ENCODE measurements at regions of chr9 and their contacts with region 1.

Region 1: GRCh38 chr9:97710356-97711222 is 13.4 kb upstream of the XPA start:
- DNase-seq: peak in 8 of 9 experiments; percentile 20 to 79 (median 50)
- ATAC-seq: peak; percentile 74
- H3K4me3 ChIP-seq: no peak overlapping the region
- H3K4me3 Mint-ChIP-seq: peak overlapping the region; percentile 35
- H3K27ac ChIP-seq: no peak overlapping the region
- H3K27ac Mint-ChIP-seq: peak overlapping the region; percentile 45
- H3K4me1 ChIP-seq: peaks cover 24% of the 10 kb centered on the region
- H3K4me1 Mint-ChIP-seq: peaks cover 32% of the 10 kb centered on the region
- H3K27me3 ChIP-seq: no peaks in the 10 kb centered on the region
- H3K27me3 Mint-ChIP-seq: peaks cover 8% of the 10 kb centered on the region
- CTCF ChIP-seq: peak; percentile 96

Region 2: GRCh38 chr9:97660340-97660739 is 50.2 kb before region 1 on chr9:
- CTCF ChIA-PET with region 1: no interaction called
- POLR2A ChIA-PET with region 1: no interaction called
- intact Hi-C with region 1: no loop called
- DNase-seq: no peak
- ATAC-seq: no peak
- H3K4me3 ChIP-seq: no peak overlapping the region
- H3K4me3 Mint-ChIP-seq: no peak overlapping the region
- H3K27ac ChIP-seq: no peak overlapping the region
- H3K27ac Mint-ChIP-seq: no peak overlapping the region
- H3K4me1 ChIP-seq: no peaks in the 10 kb centered on the region
- H3K4me1 Mint-ChIP-seq: no peaks in the 10 kb centered on the region
- H3K27me3 ChIP-seq: no peaks in the 10 kb centered on the region
- H3K27me3 Mint-ChIP-seq: no peaks in the 10 kb centered on the region
- CTCF ChIP-seq: no peak

Region 3: DNA sequence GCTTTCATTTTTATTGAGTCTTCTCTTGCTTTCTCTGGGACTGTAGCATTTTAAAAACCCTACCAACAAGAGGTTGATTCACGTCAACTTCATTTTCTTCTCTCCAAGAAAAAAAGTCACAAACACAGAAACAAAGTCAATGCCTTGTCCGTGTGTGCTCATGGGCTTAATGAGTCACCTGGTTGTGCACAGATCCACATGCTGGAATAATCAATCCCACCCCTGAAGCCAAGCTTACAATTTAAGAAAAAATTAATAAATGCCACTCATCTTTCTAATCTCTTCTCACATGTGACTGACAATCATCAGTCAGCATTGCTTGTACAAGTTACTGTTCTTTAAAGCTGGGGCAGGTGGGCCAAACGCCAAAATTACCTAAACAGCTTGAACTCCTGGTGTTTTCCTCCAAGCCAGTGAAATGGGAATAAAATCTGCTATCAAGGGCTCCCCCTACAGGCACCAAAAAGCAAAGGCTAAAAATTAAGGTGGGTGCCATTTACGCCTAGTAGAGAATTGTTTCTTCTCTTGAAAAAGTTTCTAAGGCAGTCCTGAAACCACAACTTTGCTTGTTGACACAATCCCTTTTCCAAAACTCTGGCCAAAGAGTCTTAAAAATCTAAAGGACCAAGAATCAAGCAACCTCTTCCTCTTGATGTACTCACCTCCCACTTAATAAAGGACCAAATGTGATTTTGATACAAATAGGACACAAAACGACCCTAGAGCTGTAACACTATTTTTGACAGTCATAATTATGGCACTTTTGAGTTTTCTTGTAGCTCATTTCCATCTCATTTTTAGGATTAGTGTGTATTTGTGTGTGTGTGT is 190.4 kb after region 1 on chr9:
- CTCF ChIA-PET with region 1: interaction called, 9 read pairs
- POLR2A ChIA-PET with region 1: interaction called, 3 read pairs
- intact Hi-C with region 1: loop called (anchors 1 to 2 kb)
- DNase-seq: peak in 3 of 9 experiments; percentile 28 to 79 (median 67)
- ATAC-seq: no peak
- H3K4me3 ChIP-seq: no peak overlapping the region
- H3K4me3 Mint-ChIP-seq: no peak overlapping the region
- H3K27ac ChIP-seq: peak overlapping the region in 1 of 2 experiments; percentile 17
- H3K27ac Mint-ChIP-seq: peak overlapping the region; percentile 82
- H3K4me1 ChIP-seq: peaks cover 53% of the 10 kb centered on the region
- H3K4me1 Mint-ChIP-seq: peaks cover 53% of the 10 kb centered on the region
- H3K27me3 ChIP-seq: no peaks in the 10 kb centered on the region
- H3K27me3 Mint-ChIP-seq: no peaks in the 10 kb centered on the region
- CTCF ChIP-seq: peak; percentile 75

Region 4: GRCh38 chr9:97954550-97954989 is 244.0 kb after region 1 on chr9:
- CTCF ChIA-PET with region 1: interaction called, 4 read pairs
- POLR2A ChIA-PET with region 1: no interaction called
- intact Hi-C with region 1: loop called (anchors 1 to 2 kb)
- DNase-seq: peak; percentile 14 to 82 (median 59)
- ATAC-seq: peak; percentile 96
- H3K4me3 ChIP-seq: no peak overlapping the region
- H3K4me3 Mint-ChIP-seq: no peak overlapping the region
- H3K27ac ChIP-seq: no peak overlapping the region
- H3K27ac Mint-ChIP-seq: no peak overlapping the region
- H3K4me1 ChIP-seq: no peaks in the 10 kb centered on the region
- H3K4me1 Mint-ChIP-seq: peaks cover 6% of the 10 kb centered on the region
- H3K27me3 ChIP-seq: no peaks in the 10 kb centered on the region
- H3K27me3 Mint-ChIP-seq: no peaks in the 10 kb centered on the region
- CTCF ChIP-seq: peak; percentile 73

Region 5: GRCh38 chr9:98263482-98264357 is 553.1 kb after region 1 on chr9:
- CTCF ChIA-PET with region 1: no interaction called
- POLR2A ChIA-PET with region 1: no interaction called
- intact Hi-C with region 1: loop called (anchors 2 to 5 kb)
- DNase-seq: peak; percentile 70 to 87 (median 84)
- ATAC-seq: peak; percentile 100
- H3K4me3 ChIP-seq: no peak overlapping the region
- H3K4me3 Mint-ChIP-seq: no peak overlapping the region
- H3K27ac ChIP-seq: no peak overlapping the region
- H3K27ac Mint-ChIP-seq: no peak overlapping the region
- H3K4me1 ChIP-seq: no peaks in the 10 kb centered on the region
- H3K4me1 Mint-ChIP-seq: peaks cover 2% of the 10 kb centered on the region
- H3K27me3 ChIP-seq: no peaks in the 10 kb centered on the region
- H3K27me3 Mint-ChIP-seq: no peaks in the 10 kb centered on the region
- CTCF ChIP-seq: peak; percentile 92

Region 6: DNA sequence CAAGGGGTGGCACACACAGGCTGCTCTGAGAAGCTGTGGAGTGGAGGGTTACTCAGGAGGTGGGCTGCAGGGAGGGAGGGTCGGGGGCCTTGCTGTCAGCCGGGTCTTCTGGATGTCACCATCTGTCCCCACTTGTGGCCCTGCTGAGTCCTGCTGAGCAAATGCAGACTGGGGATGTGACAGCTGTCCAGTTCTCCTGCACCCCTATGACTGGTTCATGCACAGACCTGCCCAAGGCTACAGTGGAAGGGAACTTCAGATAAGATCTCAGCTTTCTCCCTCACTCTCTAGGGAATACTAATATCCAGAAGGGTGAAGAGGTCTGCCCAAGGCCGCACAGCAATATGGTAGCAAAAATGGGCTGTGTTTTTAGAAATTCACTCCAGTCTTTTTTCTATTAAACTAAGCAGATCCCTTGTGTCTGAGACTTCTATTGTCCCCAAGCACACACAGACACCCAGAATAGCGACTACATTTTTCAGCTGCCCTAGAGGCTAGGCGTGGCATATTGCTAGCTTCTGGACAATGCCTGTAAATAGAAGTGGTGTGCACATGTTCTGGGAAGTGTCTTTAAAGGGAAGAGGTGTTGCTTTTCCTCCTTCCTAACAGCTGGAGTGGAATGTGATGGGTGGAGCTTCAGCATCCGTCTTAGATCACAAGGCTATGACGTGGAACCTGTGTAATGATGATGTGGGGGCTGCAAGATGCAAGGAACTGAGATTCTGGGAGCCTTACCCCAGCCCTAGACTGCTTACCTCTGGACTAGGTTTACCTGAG is 596.0 kb after region 1 on chr9:
- CTCF ChIA-PET with region 1: no interaction called
- POLR2A ChIA-PET with region 1: no interaction called
- intact Hi-C with region 1: no loop called
- DNase-seq: no peak
- ATAC-seq: no peak
- H3K4me3 ChIP-seq: no peak overlapping the region
- H3K4me3 Mint-ChIP-seq: no peak overlapping the region
- H3K27ac ChIP-seq: no peak overlapping the region
- H3K27ac Mint-ChIP-seq: no peak overlapping the region
- H3K4me1 ChIP-seq: no peaks in the 10 kb centered on the region
- H3K4me1 Mint-ChIP-seq: no peaks in the 10 kb centered on the region
- H3K27me3 ChIP-seq: no peaks in the 10 kb centered on the region
- H3K27me3 Mint-ChIP-seq: no peaks in the 10 kb centered on the region
- CTCF ChIP-seq: no peak

Measured in CD8-positive, alpha-beta T cell (primary cell).